Heart left ventricle (tissue), 16 donors: ENCODE measurements at regions of chr16 and their contacts with region 1.

Region 1: DNA sequence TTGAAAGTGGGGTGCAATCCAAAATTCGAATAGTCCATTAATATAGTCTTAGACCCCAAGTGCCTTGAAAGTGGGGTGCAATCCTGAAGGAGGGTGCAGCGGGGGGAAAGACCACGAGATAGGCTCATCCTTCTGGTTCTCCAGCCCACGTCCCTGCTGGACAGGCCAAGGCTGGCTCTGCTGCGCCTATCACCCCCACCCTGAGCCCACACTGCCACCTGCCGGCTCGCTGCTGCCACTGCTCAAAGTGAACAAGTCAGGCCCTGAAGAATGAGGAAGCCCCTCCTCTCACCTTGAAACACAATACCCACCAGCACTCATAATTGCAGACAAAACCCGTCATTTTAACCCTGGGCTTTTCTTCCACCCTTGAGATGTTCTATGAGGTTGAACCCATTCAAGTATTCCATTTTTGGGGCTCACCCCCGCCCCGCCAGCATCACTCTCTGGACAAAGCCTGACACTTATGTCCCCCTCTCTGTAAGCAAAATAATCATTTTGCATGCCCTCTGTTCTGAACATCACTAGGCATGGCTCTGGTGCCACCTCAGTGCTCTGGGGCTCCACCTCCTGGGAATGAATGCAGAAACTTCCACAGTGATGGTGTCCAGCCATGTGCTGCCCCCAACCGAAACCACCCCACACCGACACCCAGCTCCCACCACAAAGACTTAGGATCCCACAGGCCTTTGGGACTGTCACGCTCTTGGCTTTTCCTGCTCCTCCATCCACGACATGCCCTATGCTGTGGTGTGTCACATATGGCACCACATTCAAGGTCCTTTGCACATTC is 56.8 kb downstream of the BEAN1 start:
- DNase-seq: peak; percentile 77 to 92 (median 80)
- ATAC-seq: peak; percentile 66 to 84 (median 77)
- H3K4me3 ChIP-seq: no peak overlapping the region
- H3K27ac ChIP-seq: no peak overlapping the region
- H3K4me1 ChIP-seq: peaks cover 0 to 30% (median 10%) of the 10 kb centered on the region in 12 donors
- H3K27me3 ChIP-seq: no peaks in the 10 kb centered on the region
- CTCF ChIP-seq: peak; percentile 86 to 97 (median 93)
- POLR2A ChIP-seq: no peak

Region 2: GRCh38 chr16:66231452-66232160 is 252.3 kb before region 1 on chr16:
- intact Hi-C with region 1: no loop called
- DNase-seq: no peak
- ATAC-seq: no peak
- H3K4me3 ChIP-seq: no peak overlapping the region
- H3K27ac ChIP-seq: no peak overlapping the region
- H3K4me1 ChIP-seq: peaks cover 0 to 17% (median 0%) of the 10 kb centered on the region in 12 donors
- H3K27me3 ChIP-seq: peaks cover 0 to 4% (median 0%) of the 10 kb centered on the region in 9 donors
- CTCF ChIP-seq: no peak
- POLR2A ChIP-seq: no peak

Region 3: DNA sequence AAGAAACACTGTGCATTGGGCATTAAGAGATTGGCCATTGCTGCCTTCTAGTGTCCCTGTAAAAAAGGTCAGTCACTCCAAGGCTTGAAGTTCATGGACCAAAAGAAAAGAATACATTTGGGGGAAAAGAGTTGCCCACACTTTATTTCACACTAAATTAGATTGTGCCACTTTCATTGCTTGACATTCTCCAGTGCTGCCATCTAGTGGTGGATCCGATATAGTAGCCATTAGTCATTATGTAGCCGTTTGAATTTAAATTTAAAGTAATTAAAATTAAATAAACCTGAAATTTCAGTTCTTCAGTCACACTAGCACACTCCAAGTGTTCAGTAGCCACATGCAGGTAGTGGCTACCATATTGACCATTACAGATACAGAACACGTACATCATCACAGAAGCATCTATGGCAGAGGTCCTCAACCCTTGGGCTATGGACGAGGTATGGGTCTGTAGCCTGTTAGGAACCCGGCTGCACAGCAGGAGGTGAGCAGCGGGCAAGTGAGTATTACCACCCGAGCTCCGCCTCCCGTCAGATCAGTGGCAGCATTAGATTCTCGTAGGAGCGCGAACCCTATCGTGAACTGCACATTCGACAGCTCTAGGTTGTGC is 139.2 kb before region 1 on chr16:
- intact Hi-C with region 1: loop called in 4 of 10 experiments (anchors 5 kb)
- DNase-seq: no peak
- ATAC-seq: peak in 2 of 4 donors; percentile 34
- H3K4me3 ChIP-seq: no peak overlapping the region
- H3K27ac ChIP-seq: no peak overlapping the region
- H3K4me1 ChIP-seq: no peaks in the 10 kb centered on the region
- H3K27me3 ChIP-seq: peaks cover 0 to 7% (median 0%) of the 10 kb centered on the region in 9 donors
- CTCF ChIP-seq: peak; percentile 70 to 86 (median 80)
- POLR2A ChIP-seq: no peak

Region 4: DNA sequence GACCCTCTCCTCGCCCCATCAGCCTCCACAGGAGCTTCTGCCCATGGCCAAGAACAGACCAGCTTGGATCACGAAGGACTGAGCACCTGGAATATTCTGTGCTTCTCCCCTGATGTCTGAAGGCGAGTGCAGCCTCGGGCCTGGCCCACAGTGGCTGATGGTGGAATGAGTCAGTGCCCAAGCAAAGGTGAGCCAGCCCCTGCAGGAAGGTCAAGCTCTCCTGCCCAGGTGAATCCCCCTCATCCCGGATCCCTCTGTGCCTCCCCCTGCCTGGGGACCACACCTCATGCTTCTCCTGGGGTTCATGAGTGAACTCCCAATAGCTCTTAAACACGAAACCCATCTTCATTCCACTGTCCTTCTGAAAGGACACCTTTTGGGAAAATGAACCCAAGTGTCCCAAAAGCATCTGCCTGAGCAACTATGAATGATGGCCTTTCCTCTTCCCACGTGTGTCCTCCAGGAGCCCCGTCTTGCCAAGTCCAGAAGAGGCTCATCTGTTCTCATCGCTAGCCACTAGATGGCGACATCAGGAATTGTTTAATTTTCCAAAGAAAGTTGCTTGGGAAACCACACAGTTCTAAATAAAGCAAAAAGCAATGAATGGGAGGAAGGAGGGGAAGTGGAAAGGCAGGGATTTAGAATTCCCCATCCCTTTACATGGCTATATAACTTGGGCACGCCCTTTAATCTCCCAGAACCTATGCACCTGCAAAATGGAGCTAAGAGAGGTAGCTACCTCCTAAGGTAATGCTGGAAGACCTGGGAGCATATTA is 126.5 kb before region 1 on chr16:
- intact Hi-C with region 1: loop called (anchors 1 to 5 kb)
- DNase-seq: peak in 3 of 5 donors; percentile 59 to 72 (median 62)
- ATAC-seq: peak in 3 of 4 donors; percentile 24 to 38 (median 31)
- H3K4me3 ChIP-seq: no peak overlapping the region
- H3K27ac ChIP-seq: peak overlapping the region in 4 of 12 donors; percentile 13 to 82 (median 28)
- H3K4me1 ChIP-seq: peaks cover 6 to 50% (median 36%) of the 10 kb centered on the region in 12 donors
- H3K27me3 ChIP-seq: peaks cover 0 to 16% (median 0%) of the 10 kb centered on the region in 9 donors
- CTCF ChIP-seq: peak; percentile 61 to 83 (median 77)
- POLR2A ChIP-seq: no peak

Region 5: DNA sequence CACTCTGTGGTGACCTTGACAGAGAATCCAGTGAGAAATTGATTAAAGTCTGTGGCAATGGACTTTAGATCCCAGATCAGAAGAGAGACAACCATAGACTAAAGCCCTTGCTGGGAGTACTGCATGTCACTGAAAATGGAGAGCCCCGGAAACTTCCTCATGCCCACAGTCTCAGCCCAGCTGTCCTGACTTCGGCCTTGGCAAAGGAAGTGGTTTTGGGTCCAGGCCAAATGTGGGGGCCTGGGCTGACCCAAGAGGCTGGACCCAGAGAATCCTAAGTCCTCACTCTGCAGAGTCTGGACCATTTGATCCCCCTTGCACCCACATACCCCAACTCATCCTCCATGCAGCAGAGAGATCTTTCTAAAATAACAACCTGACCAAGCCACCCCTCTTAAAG is 61.5 kb before region 1 on chr16:
- intact Hi-C with region 1: loop called in 1 of 10 experiments (anchors 5 kb)
- DNase-seq: peak in 2 of 5 donors; percentile 28 to 53
- ATAC-seq: peak in 1 of 4 donors; percentile 40
- H3K4me3 ChIP-seq: no peak overlapping the region
- H3K27ac ChIP-seq: no peak overlapping the region
- H3K4me1 ChIP-seq: peaks cover 0 to 17% (median 6%) of the 10 kb centered on the region in 12 donors
- H3K27me3 ChIP-seq: peaks cover 0 to 27% (median 9%) of the 10 kb centered on the region in 9 donors
- CTCF ChIP-seq: no peak
- POLR2A ChIP-seq: no peak

Region 6: GRCh38 chr16:66552286-66553177 is 68.6 kb after region 1 on chr16 and contains the start of gene CKLF:
- intact Hi-C with region 1: loop called in 1 of 10 experiments (anchors 10 kb)
- DNase-seq: peak; percentile 88 to 96 (median 91)
- ATAC-seq: peak; percentile 77 to 91 (median 84)
- H3K4me3 ChIP-seq: peak within 1 kb of the TSS; percentile 49 to 78 (median 64)
- H3K27ac ChIP-seq: peak within 1 kb of the TSS; percentile 84 to 99 (median 93)
- H3K4me1 ChIP-seq: peaks cover 0 to 81% (median 45%) of the 10 kb centered on the region in 12 donors
- H3K27me3 ChIP-seq: no peaks in the 10 kb centered on the region
- CTCF ChIP-seq: no peak
- POLR2A ChIP-seq: peak in 1 of 2 donors; percentile 77
- total RNA-seq, gene CKLF: 4.1 to 28.9 (median 6.4) TPM

Region 7: GRCh38 chr16:66911112-66911511 is 427.2 kb after region 1 on chr16:
- intact Hi-C with region 1: no loop called
- DNase-seq: no peak
- ATAC-seq: no peak
- H3K4me3 ChIP-seq: no peak overlapping the region
- H3K27ac ChIP-seq: peak overlapping the region in 1 of 12 donors; percentile 23
- H3K4me1 ChIP-seq: peaks cover 0 to 29% (median 11%) of the 10 kb centered on the region in 12 donors
- H3K27me3 ChIP-seq: no peaks in the 10 kb centered on the region
- CTCF ChIP-seq: no peak
- POLR2A ChIP-seq: no peak